ENCODE measurements at regions of chr5 and their contacts with region 1.

Region 1: GRCh38 chr5:170267431-170268152 is 30.0 kb downstream of the LCP2 start:
- DNase-seq: peak; percentile 67 to 88 (median 78)
- ATAC-seq: peak; percentile 60 to 75
- H3K4me3 Mint-ChIP-seq: peak overlapping the region; percentile 51 to 86 (median 71)
- H3K27ac Mint-ChIP-seq: peak overlapping the region; percentile 90 to 99 (median 94)
- H3K4me1 Mint-ChIP-seq: peaks cover 56 to 95% (median 92%) of the 10 kb centered on the region in 4 donors
- H3K27me3 Mint-ChIP-seq: no peaks in the 10 kb centered on the region

Region 2: GRCh38 chr5:169778622-169779596 is 488.7 kb before region 1 on chr5:
- POLR2A ChIA-PET with region 1: no interaction called
- DNase-seq: no peak
- ATAC-seq: no peak
- H3K4me3 Mint-ChIP-seq: peak overlapping the region in 1 of 10 donors; percentile 24
- H3K27ac Mint-ChIP-seq: peak overlapping the region in 2 of 10 donors; percentile 1 to 65
- H3K4me1 Mint-ChIP-seq: peaks cover 4 to 10% (median 8%) of the 10 kb centered on the region in 4 donors
- H3K27me3 Mint-ChIP-seq: no peaks in the 10 kb centered on the region

Region 3: DNA sequence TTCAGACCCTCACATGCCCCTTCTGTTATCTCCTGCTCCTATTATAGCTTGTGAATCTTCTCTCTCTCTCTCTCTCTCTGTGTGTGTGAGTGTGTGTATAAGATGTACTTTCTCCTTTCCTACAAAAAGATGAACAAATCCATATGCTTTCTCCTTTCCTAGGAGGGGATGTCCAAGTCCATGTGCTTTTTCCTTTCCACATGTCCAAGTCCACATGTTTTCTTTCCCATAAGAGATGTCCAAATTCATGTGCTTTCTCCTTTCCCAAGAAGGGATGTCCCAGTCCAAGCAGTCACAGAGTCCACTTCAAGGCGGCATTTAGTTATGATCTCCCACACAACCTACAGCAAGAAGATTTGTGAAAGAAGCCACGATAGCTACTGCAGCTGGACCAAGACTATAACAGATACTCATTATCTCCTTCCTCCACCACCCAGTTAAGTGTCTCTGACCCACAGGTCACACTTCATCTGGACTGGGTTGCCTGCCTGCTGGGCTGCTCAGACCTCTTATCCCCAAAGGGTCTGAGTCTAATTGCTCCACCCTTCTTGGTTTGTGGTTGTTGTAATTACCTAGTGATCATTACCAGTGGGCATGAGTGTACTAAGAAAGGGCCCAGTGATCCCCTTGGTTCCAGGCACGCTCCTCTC is 180.3 kb before region 1 on chr5:
- POLR2A ChIA-PET with region 1: no interaction called
- DNase-seq: no peak
- ATAC-seq: no peak
- H3K4me3 Mint-ChIP-seq: peak overlapping the region in 1 of 10 donors; percentile 1
- H3K27ac Mint-ChIP-seq: peak overlapping the region in 1 of 10 donors; percentile 11
- H3K4me1 Mint-ChIP-seq: no peaks in the 10 kb centered on the region
- H3K27me3 Mint-ChIP-seq: no peaks in the 10 kb centered on the region

Region 4: GRCh38 chr5:170190436-170191134 is 77.0 kb before region 1 on chr5:
- POLR2A ChIA-PET with region 1: no interaction called
- DNase-seq: no peak
- ATAC-seq: no peak
- H3K4me3 Mint-ChIP-seq: no peak overlapping the region
- H3K27ac Mint-ChIP-seq: no peak overlapping the region
- H3K4me1 Mint-ChIP-seq: peaks cover 0 to 1% (median 0%) of the 10 kb centered on the region in 4 donors
- H3K27me3 Mint-ChIP-seq: peaks cover 0 to under 1% (median 0%) of the 10 kb centered on the region in 5 donors

Region 5: GRCh38 chr5:170247363-170247762 is 20.2 kb before region 1 on chr5:
- POLR2A ChIA-PET with region 1: interaction called, 12 read pairs
- DNase-seq: no peak
- ATAC-seq: no peak
- H3K4me3 Mint-ChIP-seq: peak overlapping the region in 1 of 10 donors; percentile 28
- H3K27ac Mint-ChIP-seq: peak overlapping the region in 5 of 10 donors; percentile 48 to 71 (median 59)
- H3K4me1 Mint-ChIP-seq: peaks cover 7 to 28% (median 16%) of the 10 kb centered on the region in 4 donors
- H3K27me3 Mint-ChIP-seq: no peaks in the 10 kb centered on the region

Region 6: GRCh38 chr5:170278611-170279452 is 11.2 kb after region 1 on chr5:
- POLR2A ChIA-PET with region 1: interaction called, 96 read pairs
- DNase-seq: peak; percentile 59 to 96 (median 92)
- ATAC-seq: peak; percentile 73 to 80
- H3K4me3 Mint-ChIP-seq: peak overlapping the region; percentile 67 to 97 (median 84)
- H3K27ac Mint-ChIP-seq: peak overlapping the region; percentile 92 to 99 (median 96)
- H3K4me1 Mint-ChIP-seq: peaks cover 69 to 100% (median 95%) of the 10 kb centered on the region in 4 donors
- H3K27me3 Mint-ChIP-seq: no peaks in the 10 kb centered on the region

Region 7: GRCh38 chr5:170293273-170293672 is 25.7 kb after region 1 on chr5:
- POLR2A ChIA-PET with region 1: interaction called, 687 read pairs
- DNase-seq: peak in 5 of 10 donors; percentile 36 to 70 (median 51)
- ATAC-seq: peak; percentile 20 to 39
- H3K4me3 Mint-ChIP-seq: peak overlapping the region; percentile 97 to 100 (median 99)
- H3K27ac Mint-ChIP-seq: peak overlapping the region; percentile 92 to 99 (median 96)
- H3K4me1 Mint-ChIP-seq: peaks cover 58 to 97% (median 76%) of the 10 kb centered on the region in 4 donors
- H3K27me3 Mint-ChIP-seq: no peaks in the 10 kb centered on the region

Region 8: GRCh38 chr5:170333161-170333910 is 65.7 kb after region 1 on chr5:
- POLR2A ChIA-PET with region 1: interaction called, 223 read pairs
- DNase-seq: peak in 8 of 10 donors; percentile 18 to 59 (median 50)
- ATAC-seq: peak; percentile 27 to 45
- H3K4me3 Mint-ChIP-seq: peak overlapping the region in 6 of 10 donors; percentile 63 to 91 (median 78)
- H3K27ac Mint-ChIP-seq: no peak overlapping the region
- H3K4me1 Mint-ChIP-seq: peaks cover 0 to 44% (median 30%) of the 10 kb centered on the region in 4 donors
- H3K27me3 Mint-ChIP-seq: no peaks in the 10 kb centered on the region

Region 9: GRCh38 chr5:170408226-170408625 is 140.6 kb after region 1 on chr5:
- POLR2A ChIA-PET with region 1: no interaction called
- DNase-seq: no peak
- ATAC-seq: no peak
- H3K4me3 Mint-ChIP-seq: no peak overlapping the region
- H3K27ac Mint-ChIP-seq: no peak overlapping the region
- H3K4me1 Mint-ChIP-seq: peaks cover 0 to 16% (median 0%) of the 10 kb centered on the region in 4 donors
- H3K27me3 Mint-ChIP-seq: no peaks in the 10 kb centered on the region

Measured in naive thymus-derived CD8-positive, alpha-beta T cell (primary cell).